ENCODE measurements at regions of chr7 and their contacts with region 1.

Region 1: DNA sequence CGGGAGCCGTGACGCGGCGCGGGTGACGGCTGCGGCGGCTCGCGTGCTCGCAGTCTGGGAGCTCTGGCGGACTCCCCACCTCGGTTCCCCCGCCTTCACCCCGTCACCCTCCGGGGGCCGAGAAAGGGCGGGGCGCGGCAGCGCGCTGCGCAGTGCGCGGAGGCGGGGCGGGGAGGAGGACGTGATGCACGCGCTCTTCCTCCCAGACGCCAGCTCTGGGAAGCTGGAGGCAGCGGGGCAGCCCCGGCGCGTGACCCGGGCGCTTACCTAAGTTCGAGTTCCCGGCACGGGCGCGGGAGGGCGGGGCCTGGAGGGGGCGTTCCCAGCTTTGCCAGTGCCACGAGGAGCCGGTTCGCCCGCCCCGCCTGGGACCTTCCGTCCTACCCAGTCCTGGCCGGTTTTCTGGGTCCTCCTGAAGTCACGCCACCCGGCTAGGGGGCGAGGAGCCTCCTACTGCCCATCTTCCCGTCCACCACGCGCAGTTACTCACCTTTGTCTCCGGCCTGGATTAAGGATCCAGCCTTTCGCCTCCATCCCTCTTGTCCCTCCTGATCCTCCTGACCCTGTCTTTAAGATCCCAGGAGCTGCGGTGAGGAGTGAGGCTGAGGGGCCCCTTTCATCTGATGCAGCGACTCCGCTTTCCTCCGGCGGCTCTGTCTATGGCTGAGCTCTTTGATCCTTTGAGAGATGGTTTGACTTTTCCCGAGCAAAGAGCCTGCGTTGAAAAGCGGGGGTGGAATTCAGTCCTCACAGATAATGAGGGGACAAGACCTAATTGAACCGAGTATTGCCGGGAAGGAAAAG is 470 bp upstream of the NAMPT start:
- DNase-seq: peak; percentile 100
- H3K4me3 Mint-ChIP-seq: peak overlapping the region; percentile 92
- H3K27ac Mint-ChIP-seq: peak overlapping the region; percentile 92
- H3K4me1 Mint-ChIP-seq: peaks cover 13% of the 10 kb centered on the region
- H3K27me3 Mint-ChIP-seq: no peaks in the 10 kb centered on the region
- CTCF ChIP-seq: no peak

Region 2: GRCh38 chr7:105210721-105211205 is 1074.5 kb before region 1 on chr7:
- CTCF ChIA-PET with region 1: no interaction called
- intact Hi-C with region 1: no loop called
- DNase-seq: no peak
- H3K4me3 Mint-ChIP-seq: no peak overlapping the region
- H3K27ac Mint-ChIP-seq: no peak overlapping the region
- H3K4me1 Mint-ChIP-seq: peaks cover 29% of the 10 kb centered on the region
- H3K27me3 Mint-ChIP-seq: no peaks in the 10 kb centered on the region
- CTCF ChIP-seq: no peak

Region 3: GRCh38 chr7:106196460-106197021 is 88.7 kb before region 1 on chr7:
- CTCF ChIA-PET with region 1: no interaction called
- intact Hi-C with region 1: no loop called
- DNase-seq: no peak
- H3K4me3 Mint-ChIP-seq: no peak overlapping the region
- H3K27ac Mint-ChIP-seq: no peak overlapping the region
- H3K4me1 Mint-ChIP-seq: no peaks in the 10 kb centered on the region
- H3K27me3 Mint-ChIP-seq: no peaks in the 10 kb centered on the region
- CTCF ChIP-seq: no peak

Region 4: GRCh38 chr7:106346678-106347217 is 61.5 kb after region 1 on chr7:
- CTCF ChIA-PET with region 1: no interaction called
- intact Hi-C with region 1: loop called (anchors 5 kb)
- DNase-seq: peak; percentile 34
- H3K4me3 Mint-ChIP-seq: no peak overlapping the region
- H3K27ac Mint-ChIP-seq: peak overlapping the region; percentile 98
- H3K4me1 Mint-ChIP-seq: peaks cover 42% of the 10 kb centered on the region
- H3K27me3 Mint-ChIP-seq: no peaks in the 10 kb centered on the region
- CTCF ChIP-seq: no peak

Region 5: DNA sequence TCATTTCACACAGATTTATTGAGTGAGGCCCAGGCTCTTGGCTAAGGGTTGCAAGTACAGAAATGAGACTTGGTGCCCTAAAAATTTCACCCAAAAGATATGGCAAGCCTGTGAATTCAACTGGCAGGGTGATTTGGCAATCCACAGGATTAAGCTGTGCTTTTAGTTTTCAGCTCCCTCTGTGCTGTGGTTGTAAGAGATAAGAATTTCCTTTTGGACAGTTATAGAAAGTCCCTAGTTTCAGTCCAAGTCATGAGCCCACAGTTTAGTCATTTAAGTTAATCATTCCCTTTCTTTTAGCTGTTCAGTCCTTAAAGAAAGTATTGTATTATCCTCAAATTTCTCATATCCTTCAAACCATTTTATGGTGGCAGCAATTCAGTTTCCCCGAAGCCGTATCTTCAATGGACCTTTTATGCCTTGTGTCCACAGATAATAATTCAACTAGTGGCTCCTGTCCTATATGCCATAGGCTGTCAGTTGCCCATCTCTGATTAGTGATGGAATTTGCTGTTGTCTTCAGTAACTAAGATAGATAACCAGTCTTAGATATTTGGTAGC is 72.9 kb after region 1 on chr7:
- CTCF ChIA-PET with region 1: interaction called, 13 read pairs
- intact Hi-C with region 1: loop called (anchors 5 kb)
- DNase-seq: peak; percentile 43
- H3K4me3 Mint-ChIP-seq: no peak overlapping the region
- H3K27ac Mint-ChIP-seq: peak overlapping the region; percentile 96
- H3K4me1 Mint-ChIP-seq: peaks cover 34% of the 10 kb centered on the region
- H3K27me3 Mint-ChIP-seq: no peaks in the 10 kb centered on the region
- CTCF ChIP-seq: no peak

Region 6: DNA sequence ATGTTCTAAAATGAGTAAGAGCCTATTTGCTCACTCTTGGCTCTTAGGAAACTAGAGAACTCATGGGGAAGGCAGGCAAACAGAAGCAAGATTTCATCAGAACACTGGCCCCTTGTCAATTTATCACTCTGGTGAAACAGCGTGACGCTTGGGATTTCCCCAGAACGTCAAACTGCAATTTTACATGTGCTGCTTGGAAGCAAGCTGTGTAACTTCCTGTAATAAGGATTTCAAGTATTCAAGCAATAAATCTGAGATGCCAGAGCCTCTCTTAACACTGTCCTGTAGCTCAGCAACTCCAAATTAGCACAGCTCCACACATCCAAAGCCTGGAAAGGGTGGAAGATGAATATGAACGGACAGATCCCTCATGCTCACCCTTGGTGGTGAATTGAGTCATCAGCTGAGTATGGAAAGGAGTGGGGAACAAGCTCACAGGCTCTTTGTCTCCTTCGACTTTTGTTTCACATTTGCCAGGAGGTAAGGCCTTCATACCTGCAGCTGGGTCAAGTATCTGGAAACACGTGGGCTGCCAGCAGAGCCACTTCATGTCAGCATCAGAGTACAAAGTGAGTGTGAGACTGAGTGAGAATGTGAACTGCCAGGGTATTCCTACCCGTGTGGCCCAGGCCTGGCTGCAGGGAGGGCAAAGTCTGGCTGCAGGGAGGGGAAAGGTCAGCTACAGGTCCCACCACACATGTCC is 139.9 kb after region 1 on chr7:
- CTCF ChIA-PET with region 1: interaction called, 6 read pairs
- intact Hi-C with region 1: loop called (anchors 1 kb)
- DNase-seq: peak; percentile 79
- H3K4me3 Mint-ChIP-seq: peak overlapping the region; percentile 21
- H3K27ac Mint-ChIP-seq: peak overlapping the region; percentile 94
- H3K4me1 Mint-ChIP-seq: peaks cover 83% of the 10 kb centered on the region
- H3K27me3 Mint-ChIP-seq: no peaks in the 10 kb centered on the region
- CTCF ChIP-seq: no peak

Region 7: GRCh38 chr7:106520962-106521940 is 236.0 kb after region 1 on chr7:
- CTCF ChIA-PET with region 1: no interaction called
- intact Hi-C with region 1: no loop called
- DNase-seq: peak; percentile 19
- H3K4me3 Mint-ChIP-seq: no peak overlapping the region
- H3K27ac Mint-ChIP-seq: no peak overlapping the region
- H3K4me1 Mint-ChIP-seq: no peaks in the 10 kb centered on the region
- H3K27me3 Mint-ChIP-seq: peaks cover 14% of the 10 kb centered on the region
- CTCF ChIP-seq: no peak

Region 8: DNA sequence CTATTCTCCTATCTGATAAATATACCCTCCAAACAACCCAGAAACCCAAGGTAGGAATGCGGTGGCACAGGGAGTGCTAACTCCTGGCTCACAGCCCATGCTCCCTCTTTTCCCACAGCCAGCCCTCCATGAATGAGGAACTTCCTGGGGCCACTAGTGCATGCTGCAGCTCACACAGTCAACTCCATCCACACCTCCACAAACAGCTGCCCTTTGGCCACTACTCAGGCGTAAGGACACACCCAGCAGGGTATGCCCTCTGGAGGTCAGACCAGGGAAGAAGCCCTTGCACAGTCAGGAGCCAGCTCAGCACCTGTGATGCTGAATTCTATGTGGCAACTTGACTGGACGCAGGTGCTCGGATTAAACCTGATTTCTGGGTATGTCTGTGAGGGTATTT is 494.6 kb after region 1 on chr7:
- CTCF ChIA-PET with region 1: no interaction called
- intact Hi-C with region 1: loop called (anchors 10 kb)
- DNase-seq: peak; percentile 78
- H3K4me3 Mint-ChIP-seq: peak overlapping the region; percentile 42
- H3K27ac Mint-ChIP-seq: peak overlapping the region; percentile 96
- H3K4me1 Mint-ChIP-seq: peaks cover 60% of the 10 kb centered on the region
- H3K27me3 Mint-ChIP-seq: no peaks in the 10 kb centered on the region
- CTCF ChIP-seq: peak; percentile 39

Measured in Calu3 (cell line).